GM12878 (cell line): ENCODE measurements at regions of chr18 and their contacts with region 1.

Region 1: GRCh38 chr18:72325307-72325706 is 218.8 kb downstream of the CBLN2 start:
- DNase-seq: no peak
- ATAC-seq: peak; percentile 50
- H3K4me3 ChIP-seq: no peak overlapping the region
- H3K27ac ChIP-seq: no peak overlapping the region
- H3K4me1 ChIP-seq: no peaks in the 10 kb centered on the region
- H3K27me3 ChIP-seq: no peaks in the 10 kb centered on the region
- CTCF ChIP-seq: no peak
- EP300 ChIP-seq: no peak
- POLR2A ChIP-seq: no peak
- RAD21 ChIP-seq: no peak

Region 2: GRCh38 chr18:72283148-72283925 is 42.0 kb before region 1 on chr18:
- CTCF ChIA-PET with region 1: no interaction called
- POLR2A ChIA-PET with region 1: no interaction called
- RAD21 ChIA-PET with region 1: no interaction called
- SMC1A ChIA-PET with region 1: interaction called, 3 read pairs
- in situ Hi-C with region 1: no loop called
- intact Hi-C with region 1: loop called (anchors 1 kb)
- DNase-seq: no peak
- ATAC-seq: peak; percentile 41; the same call in 2 of the 3 replicates
- H3K4me3 ChIP-seq: no peak overlapping the region
- H3K27ac ChIP-seq: no peak overlapping the region
- H3K4me1 ChIP-seq: no peaks in the 10 kb centered on the region
- H3K27me3 ChIP-seq: no peaks in the 10 kb centered on the region
- CTCF ChIP-seq: no peak
- EP300 ChIP-seq: no peak
- POLR2A ChIP-seq: no peak
- RAD21 ChIP-seq: no peak

Region 3: GRCh38 chr18:72375618-72376017 is 50.3 kb after region 1 on chr18:
- CTCF ChIA-PET with region 1: no interaction called
- POLR2A ChIA-PET with region 1: no interaction called
- RAD21 ChIA-PET with region 1: no interaction called
- SMC1A ChIA-PET with region 1: no interaction called
- in situ Hi-C with region 1: no loop called
- intact Hi-C with region 1: no loop called
- DNase-seq: no peak
- ATAC-seq: no peak
- H3K4me3 ChIP-seq: no peak overlapping the region
- H3K27ac ChIP-seq: no peak overlapping the region
- H3K4me1 ChIP-seq: no peaks in the 10 kb centered on the region
- H3K27me3 ChIP-seq: no peaks in the 10 kb centered on the region
- CTCF ChIP-seq: no peak
- EP300 ChIP-seq: no peak
- POLR2A ChIP-seq: no peak
- RAD21 ChIP-seq: no peak

Region 4: DNA sequence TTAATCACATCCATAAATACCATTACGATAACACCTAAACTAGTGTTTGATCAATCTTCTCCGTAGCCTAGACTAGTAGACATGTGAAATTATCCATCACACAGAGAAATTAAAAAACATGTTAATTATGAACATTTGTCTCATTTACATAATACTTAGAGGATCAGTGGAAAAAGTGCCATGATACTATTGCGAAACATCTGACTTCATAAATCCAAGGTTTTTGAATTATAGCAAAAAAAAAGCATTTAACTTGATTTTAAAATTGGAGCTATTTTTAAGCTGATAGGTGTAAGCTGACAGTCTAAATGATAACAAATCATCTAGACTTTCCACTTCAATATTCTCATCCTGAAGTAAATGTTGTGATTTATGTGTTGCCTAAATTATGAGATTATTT is 167.2 kb after region 1 on chr18:
- CTCF ChIA-PET with region 1: no interaction called
- POLR2A ChIA-PET with region 1: no interaction called
- RAD21 ChIA-PET with region 1: no interaction called
- SMC1A ChIA-PET with region 1: no interaction called
- in situ Hi-C with region 1: no loop called
- intact Hi-C with region 1: no loop called
- DNase-seq: no peak
- ATAC-seq: no peak
- H3K4me3 ChIP-seq: no peak overlapping the region
- H3K27ac ChIP-seq: no peak overlapping the region
- H3K4me1 ChIP-seq: no peaks in the 10 kb centered on the region
- H3K27me3 ChIP-seq: no peaks in the 10 kb centered on the region
- CTCF ChIP-seq: no peak
- EP300 ChIP-seq: no peak
- POLR2A ChIP-seq: no peak
- RAD21 ChIP-seq: no peak